Natural killer cell (primary cell): ENCODE measurements at regions of chr1 and their contacts with region 1.

Region 1: GRCh38 chr1:8712413-8713231 is 104.8 kb downstream of the RERE start:
- DNase-seq: peak in 1 of 2 donors; percentile 38
- ATAC-seq: peak; percentile 68 to 88 (median 81)
- H3K4me3 ChIP-seq: no peak overlapping the region
- H3K4me3 Mint-ChIP-seq: peak overlapping the region; percentile 68
- H3K27ac ChIP-seq: peak overlapping the region; percentile 79
- H3K27ac Mint-ChIP-seq: peak overlapping the region; percentile 83 to 85
- H3K4me1 ChIP-seq: peaks cover 5% of the 10 kb centered on the region
- H3K4me1 Mint-ChIP-seq: peaks cover 21 to 28% of the 10 kb centered on the region in 2 donors
- H3K27me3 ChIP-seq: no peaks in the 10 kb centered on the region
- H3K27me3 Mint-ChIP-seq: no peaks in the 10 kb centered on the region
- CTCF ChIP-seq: no peak

Region 2: GRCh38 chr1:8797216-8797615 is 84.6 kb after region 1 on chr1:
- intact Hi-C with region 1: no loop called
- DNase-seq: no peak
- ATAC-seq: no peak
- H3K4me3 ChIP-seq: no peak overlapping the region
- H3K4me3 Mint-ChIP-seq: no peak overlapping the region
- H3K27ac ChIP-seq: no peak overlapping the region
- H3K27ac Mint-ChIP-seq: no peak overlapping the region
- H3K4me1 ChIP-seq: no peaks in the 10 kb centered on the region
- H3K4me1 Mint-ChIP-seq: peaks cover 9 to 10% of the 10 kb centered on the region in 2 donors
- H3K27me3 ChIP-seq: no peaks in the 10 kb centered on the region
- H3K27me3 Mint-ChIP-seq: no peaks in the 10 kb centered on the region
- CTCF ChIP-seq: no peak

Region 3: DNA sequence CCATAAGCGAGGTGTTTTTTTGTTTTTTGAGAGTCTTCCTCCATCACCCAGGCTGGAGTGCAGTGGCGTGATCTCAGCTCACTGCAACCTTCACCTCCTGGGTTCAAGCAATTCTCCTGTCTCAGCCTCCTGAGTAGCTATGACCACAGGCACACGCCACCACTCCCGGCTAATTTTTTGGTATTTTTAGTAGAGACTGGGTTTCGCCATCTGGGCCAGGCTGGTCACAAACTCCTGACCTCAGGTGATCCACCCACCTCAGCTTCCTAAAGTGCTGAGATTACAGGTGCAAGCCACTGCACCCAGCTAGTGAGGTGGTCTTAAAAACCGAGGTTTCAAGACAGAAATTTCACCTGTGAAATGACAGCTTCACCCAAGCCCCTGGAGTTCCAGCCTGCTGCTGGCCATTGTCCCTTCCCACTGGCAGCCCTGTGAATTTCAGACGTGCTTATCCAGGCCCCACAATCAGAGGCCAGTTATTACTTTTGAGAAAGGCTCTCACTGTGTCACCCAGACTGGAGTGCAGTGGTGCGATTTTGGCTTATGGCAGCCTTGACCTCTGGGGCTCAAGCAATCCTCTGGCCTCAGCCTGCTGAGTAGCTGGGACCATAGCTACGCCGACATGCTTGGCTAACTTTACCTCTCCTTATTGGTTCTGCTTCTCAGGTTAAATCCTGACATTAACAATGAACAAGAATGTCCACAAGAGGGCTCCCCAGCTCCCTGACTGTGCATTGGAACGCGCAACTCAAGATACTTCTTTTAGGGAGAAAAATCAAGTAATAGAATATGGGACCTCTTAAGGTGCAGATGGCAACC is 146.5 kb after region 1 on chr1:
- intact Hi-C with region 1: loop called (anchors 10 kb)
- DNase-seq: peak in 1 of 2 donors; percentile 78
- ATAC-seq: peak; percentile 68 to 78 (median 75)
- H3K4me3 ChIP-seq: no peak overlapping the region
- H3K4me3 Mint-ChIP-seq: no peak overlapping the region
- H3K27ac ChIP-seq: no peak overlapping the region
- H3K27ac Mint-ChIP-seq: peak overlapping the region in 1 of 2 donors; percentile 74
- H3K4me1 ChIP-seq: peaks cover 22% of the 10 kb centered on the region
- H3K4me1 Mint-ChIP-seq: peaks cover 13 to 27% of the 10 kb centered on the region in 2 donors
- H3K27me3 ChIP-seq: no peaks in the 10 kb centered on the region
- H3K27me3 Mint-ChIP-seq: no peaks in the 10 kb centered on the region
- CTCF ChIP-seq: peak; percentile 66

Region 4: GRCh38 chr1:8925406-8925805 is 212.8 kb after region 1 on chr1:
- intact Hi-C with region 1: no loop called
- DNase-seq: no peak
- ATAC-seq: no peak
- H3K4me3 ChIP-seq: no peak overlapping the region
- H3K4me3 Mint-ChIP-seq: no peak overlapping the region
- H3K27ac ChIP-seq: no peak overlapping the region
- H3K27ac Mint-ChIP-seq: no peak overlapping the region
- H3K4me1 ChIP-seq: peaks cover 8% of the 10 kb centered on the region
- H3K4me1 Mint-ChIP-seq: peaks cover 12 to 17% of the 10 kb centered on the region in 2 donors
- H3K27me3 ChIP-seq: no peaks in the 10 kb centered on the region
- H3K27me3 Mint-ChIP-seq: no peaks in the 10 kb centered on the region
- CTCF ChIP-seq: no peak